Activated CD4-positive, alpha-beta memory T cell treated with anti-CD3 and anti-CD28 coated beads, Interleukin-2, amount 10 ng/mL, durations not matched to agents 7 days and 5 days (primary cell): ENCODE measurements at regions of chr2 and their contacts with region 1.

Region 1: DNA sequence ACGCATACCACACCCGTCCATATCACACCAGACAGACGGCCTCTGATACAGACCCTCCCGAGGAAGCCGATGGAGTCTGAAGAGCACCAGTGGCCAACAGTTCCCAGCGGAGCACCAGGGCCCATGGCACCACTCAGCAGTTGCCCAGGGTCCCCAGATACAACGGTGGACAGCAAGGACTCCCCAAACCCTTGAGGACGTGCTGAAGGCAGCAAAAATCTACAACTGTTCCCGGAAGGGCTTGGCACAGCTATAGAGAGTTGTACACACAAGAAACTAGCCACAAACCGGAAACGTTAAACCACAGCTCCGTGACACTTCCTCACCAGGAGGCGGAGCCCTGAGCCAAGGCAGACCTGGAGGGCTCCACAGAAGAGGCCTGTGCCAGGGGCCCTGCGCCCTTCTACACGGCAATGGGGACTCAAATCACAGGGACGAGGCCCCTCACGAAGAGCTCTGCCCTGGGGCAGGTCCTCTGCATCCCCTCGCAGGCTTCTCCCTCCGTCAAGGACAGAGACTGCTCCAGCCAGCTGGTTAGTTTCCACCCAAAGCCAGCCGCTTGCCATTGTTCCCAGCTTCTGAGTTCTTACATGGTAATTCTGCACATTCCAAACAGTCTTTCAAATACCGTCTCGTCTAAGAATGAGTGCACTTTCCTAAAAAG is 133.4 kb downstream of the HDAC4 start:
- DNase-seq: peak; percentile 96
- H3K4me3 Mint-ChIP-seq: peak overlapping the region; percentile 97
- H3K27ac Mint-ChIP-seq: peak overlapping the region; percentile 97
- H3K4me1 Mint-ChIP-seq: peaks cover 88% of the 10 kb centered on the region
- H3K27me3 Mint-ChIP-seq: peaks cover 11% of the 10 kb centered on the region

Region 2: GRCh38 chr2:239230318-239231052 is 36.9 kb before region 1 on chr2:
- CTCF ChIA-PET with region 1: interaction called, 3 read pairs
- POLR2A ChIA-PET with region 1: interaction called, 10 read pairs
- DNase-seq: no peak
- H3K4me3 Mint-ChIP-seq: no peak overlapping the region
- H3K27ac Mint-ChIP-seq: peak overlapping the region; percentile 63
- H3K4me1 Mint-ChIP-seq: peaks cover 73% of the 10 kb centered on the region
- H3K27me3 Mint-ChIP-seq: no peaks in the 10 kb centered on the region

Region 3: GRCh38 chr2:239288951-239289511 is 21.6 kb after region 1 on chr2:
- CTCF ChIA-PET with region 1: interaction called, 11 read pairs
- POLR2A ChIA-PET with region 1: interaction called, 41 read pairs
- DNase-seq: peak; percentile 56
- H3K4me3 Mint-ChIP-seq: peak overlapping the region; percentile 75
- H3K27ac Mint-ChIP-seq: peak overlapping the region; percentile 97
- H3K4me1 Mint-ChIP-seq: peaks cover 74% of the 10 kb centered on the region
- H3K27me3 Mint-ChIP-seq: peaks cover 18% of the 10 kb centered on the region

Region 4: GRCh38 chr2:239303711-239304532 is 36.5 kb after region 1 on chr2:
- CTCF ChIA-PET with region 1: interaction called, 9 read pairs
- POLR2A ChIA-PET with region 1: interaction called, 22 read pairs
- DNase-seq: no peak
- H3K4me3 Mint-ChIP-seq: no peak overlapping the region
- H3K27ac Mint-ChIP-seq: no peak overlapping the region
- H3K4me1 Mint-ChIP-seq: peaks cover 43% of the 10 kb centered on the region
- H3K27me3 Mint-ChIP-seq: peaks cover 4% of the 10 kb centered on the region

Region 5: DNA sequence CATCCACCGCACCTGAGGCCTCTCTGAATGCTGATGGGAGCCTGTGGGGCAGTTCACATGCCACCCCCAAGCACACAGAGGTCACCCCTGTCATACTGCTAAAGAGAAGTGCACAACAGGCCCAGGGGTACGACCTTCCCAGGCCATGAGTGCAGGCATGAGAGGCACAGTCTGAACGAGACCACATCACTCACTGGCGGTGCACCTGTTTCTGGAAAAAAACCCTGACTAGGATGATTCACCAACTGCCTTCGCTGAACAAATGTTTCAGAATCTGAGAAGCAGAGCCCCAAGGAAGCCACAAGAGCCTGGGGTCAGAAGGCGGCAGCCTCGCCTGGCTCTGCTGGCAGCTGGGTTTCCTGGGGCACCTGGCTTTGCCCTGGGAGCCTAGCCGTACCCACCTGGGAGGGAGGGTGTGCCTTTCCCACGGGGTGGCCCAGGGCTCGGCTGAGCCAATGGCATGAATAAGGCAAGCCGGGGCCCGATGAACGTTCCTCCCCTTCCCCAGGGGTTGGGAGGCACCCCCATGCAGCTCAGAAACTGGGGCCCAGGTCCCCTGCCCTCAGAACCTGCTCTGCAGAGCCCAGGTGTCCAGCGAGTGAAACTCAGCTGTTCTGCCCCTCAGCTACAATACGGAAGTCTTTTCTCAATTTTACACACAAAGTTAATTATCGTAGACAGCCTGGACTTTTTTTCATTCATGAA is 59.6 kb after region 1 on chr2:
- CTCF ChIA-PET with region 1: interaction called, 3 read pairs
- POLR2A ChIA-PET with region 1: interaction called, 43 read pairs
- DNase-seq: peak; percentile 82
- H3K4me3 Mint-ChIP-seq: peak overlapping the region; percentile 9
- H3K27ac Mint-ChIP-seq: peak overlapping the region; percentile 88
- H3K4me1 Mint-ChIP-seq: peaks cover 80% of the 10 kb centered on the region
- H3K27me3 Mint-ChIP-seq: no peaks in the 10 kb centered on the region

Region 6: GRCh38 chr2:239380831-239381708 is 113.7 kb after region 1 on chr2:
- CTCF ChIA-PET with region 1: interaction called, 15 read pairs
- POLR2A ChIA-PET with region 1: interaction called, 11 read pairs
- DNase-seq: peak; percentile 77
- H3K4me3 Mint-ChIP-seq: peak overlapping the region; percentile 66
- H3K27ac Mint-ChIP-seq: peak overlapping the region; percentile 93
- H3K4me1 Mint-ChIP-seq: peaks cover 31% of the 10 kb centered on the region
- H3K27me3 Mint-ChIP-seq: no peaks in the 10 kb centered on the region

Region 7: GRCh38 chr2:239496700-239497099 is 229.3 kb after region 1 on chr2:
- CTCF ChIA-PET with region 1: no interaction called
- POLR2A ChIA-PET with region 1: no interaction called
- DNase-seq: no peak
- H3K4me3 Mint-ChIP-seq: no peak overlapping the region
- H3K27ac Mint-ChIP-seq: no peak overlapping the region
- H3K4me1 Mint-ChIP-seq: no peaks in the 10 kb centered on the region
- H3K27me3 Mint-ChIP-seq: peaks cover 12% of the 10 kb centered on the region

Region 8: GRCh38 chr2:239677453-239678185 is 410.2 kb after region 1 on chr2:
- CTCF ChIA-PET with region 1: no interaction called
- POLR2A ChIA-PET with region 1: no interaction called
- DNase-seq: peak; percentile 4
- H3K4me3 Mint-ChIP-seq: no peak overlapping the region
- H3K27ac Mint-ChIP-seq: no peak overlapping the region
- H3K4me1 Mint-ChIP-seq: no peaks in the 10 kb centered on the region
- H3K27me3 Mint-ChIP-seq: peaks cover 18% of the 10 kb centered on the region